ENCODE measurements at regions of chr16 and their contacts with region 1.

Region 1: DNA sequence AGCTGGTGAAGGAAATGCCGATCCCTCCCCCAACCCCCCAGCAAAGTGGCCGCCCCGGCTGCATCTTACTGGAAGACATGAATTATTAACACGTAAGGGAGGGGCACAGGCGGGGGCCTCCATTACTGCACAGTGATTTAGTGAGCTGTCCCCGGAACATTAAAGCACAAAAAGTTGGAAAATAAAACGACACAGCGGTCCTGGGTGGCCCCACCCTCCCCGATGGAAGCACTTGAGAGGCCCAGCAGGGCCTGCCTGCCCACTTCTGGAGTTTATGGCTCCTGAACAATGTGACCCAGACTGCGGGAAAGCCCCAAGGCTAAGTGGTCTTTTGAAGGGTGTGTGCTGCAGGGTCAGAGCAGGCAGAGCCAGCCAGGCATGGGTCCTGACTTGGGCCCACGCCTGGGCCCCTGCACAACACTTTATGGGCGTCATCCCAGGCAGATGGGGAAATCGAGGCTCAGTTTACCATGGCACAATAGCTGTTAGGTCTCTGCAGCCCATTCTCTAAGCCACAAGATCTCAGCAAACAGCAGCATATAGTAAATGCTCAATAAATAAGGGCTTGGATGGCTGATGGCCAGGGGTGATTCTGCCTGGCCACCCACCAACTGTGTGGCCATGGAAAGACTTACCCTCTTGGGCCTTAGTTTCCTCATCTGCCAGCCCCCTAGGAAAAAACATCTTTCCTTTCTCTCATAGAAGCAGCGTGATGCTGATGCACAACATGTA is 22.8 kb downstream of the CCDC102A start:
- DNase-seq: peak; percentile 35
- H3K4me3 ChIP-seq: no peak overlapping the region
- H3K27me3 ChIP-seq: no peaks in the 10 kb centered on the region; the same call in 1 of the 2 replicates
- CTCF ChIP-seq: no peak

Region 2: DNA sequence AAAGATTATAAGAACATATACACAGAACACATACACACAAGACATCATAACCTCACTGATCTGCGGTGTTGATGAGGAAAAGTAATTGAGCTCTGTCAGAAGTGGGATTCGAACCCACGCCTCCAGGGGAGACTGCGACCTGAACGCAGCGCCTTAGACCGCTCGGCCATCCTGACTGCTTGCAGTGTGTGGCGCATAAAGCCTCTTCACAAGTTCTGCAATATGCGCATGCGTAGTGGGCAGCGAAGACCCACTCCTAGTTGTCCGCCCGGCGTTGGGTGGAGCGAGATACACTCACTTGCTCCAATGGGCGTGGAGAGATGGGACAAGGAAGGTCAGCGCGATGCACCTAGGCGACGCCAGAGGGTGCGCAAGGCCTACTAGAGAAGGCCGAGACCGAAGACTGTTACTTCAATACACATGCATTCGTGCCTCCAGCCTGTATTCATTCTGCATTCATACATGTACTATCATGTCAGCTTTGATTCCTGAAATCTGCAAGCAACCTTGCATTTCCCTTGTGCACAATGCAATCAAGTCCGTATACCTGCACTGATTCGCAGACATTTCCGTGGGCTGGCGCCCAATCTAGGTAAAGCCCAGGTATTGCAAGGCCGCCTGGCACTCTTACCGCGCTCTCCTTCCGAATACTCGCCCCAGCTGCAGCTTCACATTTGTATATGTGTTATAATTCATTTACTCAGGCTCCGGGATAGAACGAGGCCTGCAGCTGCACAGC is 213.0 kb before region 1 on chr16:
- CTCF ChIA-PET with region 1: interaction called, 16 read pairs
- POLR2A ChIA-PET with region 1: no interaction called
- DNase-seq: peak; percentile 91
- H3K4me3 ChIP-seq: peak overlapping the region; percentile 29
- H3K27me3 ChIP-seq: peaks cover 7% of the 10 kb centered on the region
- CTCF ChIP-seq: peak; percentile 96

Region 3: GRCh38 chr16:57475711-57476339 is 37.7 kb before region 1 on chr16:
- CTCF ChIA-PET with region 1: interaction called, 15 read pairs
- POLR2A ChIA-PET with region 1: interaction called, 12 read pairs
- DNase-seq: no peak
- H3K4me3 ChIP-seq: no peak overlapping the region
- H3K27me3 ChIP-seq: no peaks in the 10 kb centered on the region
- CTCF ChIP-seq: peak; percentile 70

Measured in BJ (cell line).